ENCODE measurements at regions of chr19 and their contacts with region 1.

Region 1: GRCh38 chr19:8355631-8356402 is 8.1 kb upstream of the ANGPTL4 start:
- DNase-seq: no peak
- H3K4me3 ChIP-seq: no peak overlapping the region
- H3K27ac ChIP-seq: peak overlapping the region in 1 of 3 donors; percentile 11
- H3K4me1 ChIP-seq: peaks cover 7 to 33% of the 10 kb centered on the region in 2 donors
- H3K27me3 ChIP-seq: no peaks in the 10 kb centered on the region
- CTCF ChIP-seq: no peak
- POLR2A ChIP-seq: no peak

Region 2: DNA sequence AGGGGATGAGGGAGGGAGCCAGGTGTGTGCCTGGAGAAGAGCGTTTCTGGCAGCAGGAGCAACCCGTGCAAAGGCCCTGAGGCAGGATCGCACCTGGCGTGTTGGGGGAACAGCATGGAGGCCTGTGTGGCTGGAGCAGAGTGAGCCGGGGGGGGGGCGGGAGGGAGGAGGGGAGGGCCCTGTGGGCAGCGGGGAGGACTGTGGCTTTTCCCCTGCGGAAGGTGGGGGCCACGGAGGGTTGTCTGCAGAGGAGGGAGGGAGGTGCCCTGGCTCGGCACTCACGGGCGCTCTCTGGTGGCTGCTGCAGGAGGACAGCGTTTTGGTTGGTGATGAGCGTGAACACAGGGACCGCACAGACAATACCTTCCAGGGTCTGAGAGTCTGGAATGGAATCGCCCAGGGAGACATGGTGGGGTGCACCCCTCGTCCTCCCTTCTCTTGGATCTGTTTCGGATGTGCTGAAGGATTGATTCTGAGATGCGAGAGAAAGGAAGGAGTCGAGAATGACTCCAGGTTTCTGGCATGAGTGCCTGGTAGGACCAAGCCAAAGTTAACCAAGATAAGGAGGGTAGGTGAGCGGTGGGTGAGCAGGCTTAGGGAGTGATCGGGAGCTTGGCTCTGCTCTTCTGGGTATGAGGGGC is 40.9 kb after region 1 on chr19:
- intact Hi-C with region 1: loop called (anchors 5 kb)
- DNase-seq: peak; percentile 63 to 74
- H3K4me3 ChIP-seq: no peak overlapping the region
- H3K27ac ChIP-seq: peak overlapping the region; percentile 97 to 100 (median 100)
- H3K4me1 ChIP-seq: peaks cover 78 to 84% of the 10 kb centered on the region in 2 donors
- H3K27me3 ChIP-seq: no peaks in the 10 kb centered on the region
- CTCF ChIP-seq: peak in 5 of 6 experiments; percentile 34 to 53 (median 46)
- POLR2A ChIP-seq: no peak

Region 3: GRCh38 chr19:8505680-8506401 is 150.0 kb after region 1 on chr19:
- intact Hi-C with region 1: loop called (anchors 5 kb)
- DNase-seq: peak; percentile 82 to 86
- H3K4me3 ChIP-seq: peak overlapping the region in 1 of 3 donors; percentile 30
- H3K27ac ChIP-seq: peak overlapping the region in 2 of 3 donors; percentile 27 to 50
- H3K4me1 ChIP-seq: peaks cover 5 to 11% of the 10 kb centered on the region in 2 donors
- H3K27me3 ChIP-seq: no peaks in the 10 kb centered on the region
- CTCF ChIP-seq: peak; percentile 60 to 90 (median 80)
- POLR2A ChIP-seq: peak in 1 of 2 donors; percentile 14